Activated CD4-positive, alpha-beta T cell treated with anti-CD3 and anti-CD28 coated beads, Interleukin-2, amount 10 ng/mL, durations not matched to agents 7 days and 5 days (primary cell): ENCODE measurements at regions of chr14 and their contacts with region 1.

Region 1: GRCh38 chr14:21498553-21499526 is 12.3 kb downstream of the METTL3 start:
- DNase-seq: peak; percentile 58
- H3K4me3 Mint-ChIP-seq: no peak overlapping the region
- H3K27ac Mint-ChIP-seq: peak overlapping the region; percentile 69
- H3K4me1 Mint-ChIP-seq: peaks cover 30% of the 10 kb centered on the region
- H3K27me3 Mint-ChIP-seq: no peaks in the 10 kb centered on the region

Region 2: GRCh38 chr14:21486640-21487087 is 12.2 kb before region 1 on chr14:
- CTCF ChIA-PET with region 1: interaction called, 17 read pairs
- POLR2A ChIA-PET with region 1: interaction called, 5 read pairs
- DNase-seq: no peak
- H3K4me3 Mint-ChIP-seq: no peak overlapping the region
- H3K27ac Mint-ChIP-seq: no peak overlapping the region
- H3K4me1 Mint-ChIP-seq: no peaks in the 10 kb centered on the region
- H3K27me3 Mint-ChIP-seq: no peaks in the 10 kb centered on the region

Region 3: DNA sequence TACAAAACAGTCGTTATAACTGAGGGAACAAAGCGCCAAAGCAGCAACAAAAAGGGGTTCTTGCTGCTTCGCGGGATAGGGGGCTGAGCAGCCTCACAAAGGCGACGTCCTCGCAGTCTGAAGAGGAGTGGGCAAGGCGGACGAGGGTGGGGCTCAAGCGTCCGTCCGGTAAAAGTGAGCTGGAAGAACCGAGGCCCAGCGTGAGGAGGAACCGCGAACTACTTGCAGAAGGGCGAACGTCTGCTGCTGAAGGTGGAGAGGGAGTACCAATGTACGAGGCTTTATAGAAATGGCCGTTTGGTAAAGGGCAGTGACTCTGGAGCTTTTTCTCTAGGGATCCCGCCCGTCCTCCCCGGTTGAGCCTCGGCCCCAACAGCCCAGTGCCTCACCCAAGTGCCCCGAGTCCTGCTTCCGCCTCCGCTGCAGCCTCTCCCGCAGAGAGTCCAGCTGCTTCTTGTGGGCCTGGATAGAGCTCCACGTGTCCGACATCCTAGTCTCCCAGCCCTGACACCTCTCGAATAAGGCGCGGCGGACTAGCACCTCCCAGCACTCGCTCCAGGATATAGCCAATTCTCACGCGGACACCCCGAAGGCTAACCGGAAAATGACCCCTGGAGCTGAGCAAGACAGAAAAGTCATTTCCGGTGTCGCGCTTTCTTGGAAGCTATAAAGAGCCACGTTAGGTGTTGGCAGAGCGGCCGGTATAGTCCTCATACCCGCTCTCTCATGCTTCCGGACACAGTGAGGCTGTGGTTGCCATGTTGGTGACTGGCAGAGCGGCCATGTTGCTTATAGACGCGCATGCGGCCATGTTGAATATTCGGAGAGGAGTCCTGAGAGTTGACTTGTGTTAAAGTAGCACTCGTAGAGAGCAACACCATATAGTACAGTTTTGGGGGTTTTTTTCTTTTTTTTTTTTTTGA is 12.2 kb after region 1 on chr14 and contains the start of gene METTL3:
- CTCF ChIA-PET with region 1: interaction called, 24 read pairs
- POLR2A ChIA-PET with region 1: no interaction called
- DNase-seq: peak; percentile 97
- H3K4me3 Mint-ChIP-seq: peak within 1 kb of the TSS; percentile 99
- H3K27ac Mint-ChIP-seq: peak within 1 kb of the TSS; percentile 100
- H3K4me1 Mint-ChIP-seq: peaks cover 38% of the 10 kb centered on the region
- H3K27me3 Mint-ChIP-seq: peaks cover 3% of the 10 kb centered on the region
- total RNA-seq, gene METTL3: 80.2 to 81.4 TPM

Region 4: DNA sequence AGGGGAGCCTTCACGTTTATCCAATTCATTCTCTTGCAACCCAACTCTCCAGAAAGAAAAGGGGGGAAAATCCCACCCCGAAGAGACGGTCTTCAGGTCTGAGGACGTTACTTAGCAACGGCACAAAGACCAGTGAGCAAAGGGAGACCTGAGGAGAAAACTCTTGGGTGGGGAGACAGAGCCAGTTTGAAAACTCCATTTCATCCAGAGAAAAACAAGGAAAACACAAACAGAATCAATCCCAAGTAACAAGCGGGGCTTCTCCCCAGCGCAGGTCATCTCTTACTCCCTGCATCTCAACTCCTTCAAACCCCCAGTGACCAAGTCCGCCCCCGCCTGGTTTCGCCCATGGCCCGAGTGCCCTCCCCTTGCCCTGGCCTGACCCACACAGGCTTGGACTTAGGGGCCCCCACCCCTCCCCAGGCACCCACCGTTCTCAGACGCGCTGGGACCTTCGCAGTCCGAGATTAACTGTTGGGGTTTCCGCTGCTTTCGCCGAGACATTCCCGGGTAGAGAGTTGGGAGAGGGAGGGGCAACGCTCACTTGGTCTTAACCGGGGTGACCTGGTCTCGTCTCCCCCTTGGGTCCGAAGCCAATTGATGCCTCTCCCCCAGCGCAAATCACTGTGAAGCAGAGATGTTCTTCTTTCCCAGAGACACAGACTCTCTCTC is 37.7 kb after region 1 on chr14:
- CTCF ChIA-PET with region 1: no interaction called
- POLR2A ChIA-PET with region 1: no interaction called
- DNase-seq: no peak
- H3K4me3 Mint-ChIP-seq: no peak overlapping the region
- H3K27ac Mint-ChIP-seq: no peak overlapping the region
- H3K4me1 Mint-ChIP-seq: peaks cover 5% of the 10 kb centered on the region
- H3K27me3 Mint-ChIP-seq: peaks cover 57% of the 10 kb centered on the region

Region 5: DNA sequence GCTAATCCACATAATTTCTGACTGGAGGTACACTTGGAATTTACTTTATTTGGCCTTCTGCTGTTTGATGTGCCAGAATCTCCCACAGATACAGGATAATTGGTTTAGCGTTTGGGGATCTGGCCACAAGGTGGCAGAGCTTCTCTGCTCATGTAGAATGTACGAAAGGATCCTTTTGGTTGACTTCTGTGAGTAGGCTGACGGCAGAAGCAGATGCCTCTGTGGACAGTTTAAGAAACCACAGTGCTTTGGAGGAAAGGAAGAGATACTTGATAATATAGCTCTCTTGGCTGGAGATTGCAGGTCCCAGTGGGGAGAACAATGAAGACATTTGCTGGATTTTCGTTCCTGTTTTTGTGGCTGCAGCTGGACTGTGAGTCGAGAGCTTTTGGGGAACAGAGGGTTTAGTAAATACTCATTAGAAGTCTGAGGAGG is 250.0 kb after region 1 on chr14:
- CTCF ChIA-PET with region 1: no interaction called
- POLR2A ChIA-PET with region 1: no interaction called
- DNase-seq: peak; percentile 67
- H3K4me3 Mint-ChIP-seq: peak overlapping the region; percentile 61
- H3K27ac Mint-ChIP-seq: peak overlapping the region; percentile 67
- H3K4me1 Mint-ChIP-seq: peaks cover 6% of the 10 kb centered on the region
- H3K27me3 Mint-ChIP-seq: peaks cover 18% of the 10 kb centered on the region